H1 (cell line): ENCODE measurements at regions of chr4 and their contacts with region 1.

Region 1: GRCh38 chr4:24794916-24795665 is at the start of gene SOD3:
- DNase-seq: peak; percentile 53 to 74
- H3K4me3 ChIP-seq: peak within 1 kb of the TSS; percentile 0 to 57 (median 34); a peak in 5 of 8 replicates
- H3K27ac ChIP-seq: no peak within 1 kb of the TSS
- H3K4me1 ChIP-seq: peaks cover 1 to 18% (median 8%) of the 10 kb centered on the region in 4 experiments; a peak in 6 of 7 replicates
- H3K27me3 ChIP-seq: peaks cover 12 to 29% (median 25%) of the 10 kb centered on the region in 4 experiments
- CTCF ChIP-seq: no peak
- EP300 ChIP-seq: no peak
- POLR2A ChIP-seq: no peak
- RAD21 ChIP-seq: no peak; a peak in 1 of 4 replicates
- total RNA-seq, gene SOD3: 4.9 and 5.5 TPM in 2 replicates

Region 2: DNA sequence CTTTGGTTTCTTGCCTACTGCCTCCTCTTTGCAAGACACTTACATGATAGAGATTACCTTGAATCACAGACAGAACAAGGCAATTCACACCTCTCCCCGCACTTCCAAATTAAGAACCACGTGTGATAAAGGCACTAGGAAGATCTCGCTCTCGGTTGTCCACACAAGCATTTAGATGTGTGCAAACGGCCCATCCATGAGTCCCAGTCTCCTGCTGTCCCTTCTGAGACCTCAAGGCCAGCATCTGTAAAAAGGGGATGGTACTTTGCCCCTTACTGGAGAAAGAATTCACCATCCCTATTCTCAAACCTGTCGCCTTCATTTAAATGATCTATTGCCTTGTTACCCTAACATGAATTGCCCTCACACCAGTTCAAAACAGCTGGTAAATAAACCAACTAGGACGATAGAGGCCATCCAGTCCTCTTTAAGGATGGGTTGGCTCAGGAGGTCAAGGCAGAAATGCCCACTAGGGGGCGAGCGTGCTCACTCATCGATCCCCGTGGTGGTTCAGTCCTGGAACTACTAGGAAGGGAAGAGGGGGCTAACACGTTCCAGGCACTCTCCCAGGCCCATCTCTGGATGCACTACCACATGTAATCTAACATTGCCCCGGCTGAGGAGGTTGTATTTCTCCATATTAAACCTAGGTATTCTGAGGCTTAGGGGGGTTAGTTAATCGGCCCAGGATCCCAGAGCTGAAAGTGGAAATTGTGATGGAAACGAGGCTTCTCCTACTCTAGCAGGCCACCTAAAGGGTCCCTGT is 306.5 kb before region 1 on chr4:
- CTCF ChIA-PET with region 1: interaction called, 16 read pairs
- POLR2A ChIA-PET with region 1: no interaction called
- DNase-seq: peak in 1 of 2 experiments; percentile 98
- H3K4me3 ChIP-seq: no peak overlapping the region
- H3K27ac ChIP-seq: no peak overlapping the region
- H3K4me1 ChIP-seq: peaks cover 0 to 3% (median 0%) of the 10 kb centered on the region in 4 experiments; a peak in 3 of 7 replicates
- H3K27me3 ChIP-seq: peaks cover 0 to 1% (median 0%) of the 10 kb centered on the region in 4 experiments; a peak in 1 of 7 replicates
- CTCF ChIP-seq: peak; percentile 86 to 97 (median 96)
- EP300 ChIP-seq: no peak
- POLR2A ChIP-seq: no peak
- RAD21 ChIP-seq: peak; percentile 89 to 91

Region 3: GRCh38 chr4:24675721-24676389 is 119.2 kb before region 1 on chr4:
- CTCF ChIA-PET with region 1: no interaction called
- POLR2A ChIA-PET with region 1: no interaction called
- DNase-seq: no peak
- H3K4me3 ChIP-seq: no peak overlapping the region
- H3K27ac ChIP-seq: no peak overlapping the region
- H3K4me1 ChIP-seq: peaks cover 0 to 9% (median 3%) of the 10 kb centered on the region in 4 experiments; a peak in 5 of 7 replicates
- H3K27me3 ChIP-seq: no peaks in the 10 kb centered on the region
- CTCF ChIP-seq: no peak
- EP300 ChIP-seq: no peak
- POLR2A ChIP-seq: no peak
- RAD21 ChIP-seq: no peak

Region 4: GRCh38 chr4:24736066-24736465 is 59.0 kb before region 1 on chr4:
- CTCF ChIA-PET with region 1: interaction called, 25 read pairs
- POLR2A ChIA-PET with region 1: no interaction called
- DNase-seq: peak in 1 of 2 experiments; percentile 54
- H3K4me3 ChIP-seq: no peak overlapping the region
- H3K27ac ChIP-seq: no peak overlapping the region
- H3K4me1 ChIP-seq: no peaks in the 10 kb centered on the region
- H3K27me3 ChIP-seq: no peaks in the 10 kb centered on the region
- CTCF ChIP-seq: peak; percentile 65 to 81 (median 66)
- EP300 ChIP-seq: no peak
- POLR2A ChIP-seq: no peak
- RAD21 ChIP-seq: peak; percentile 72 to 83

Region 5: DNA sequence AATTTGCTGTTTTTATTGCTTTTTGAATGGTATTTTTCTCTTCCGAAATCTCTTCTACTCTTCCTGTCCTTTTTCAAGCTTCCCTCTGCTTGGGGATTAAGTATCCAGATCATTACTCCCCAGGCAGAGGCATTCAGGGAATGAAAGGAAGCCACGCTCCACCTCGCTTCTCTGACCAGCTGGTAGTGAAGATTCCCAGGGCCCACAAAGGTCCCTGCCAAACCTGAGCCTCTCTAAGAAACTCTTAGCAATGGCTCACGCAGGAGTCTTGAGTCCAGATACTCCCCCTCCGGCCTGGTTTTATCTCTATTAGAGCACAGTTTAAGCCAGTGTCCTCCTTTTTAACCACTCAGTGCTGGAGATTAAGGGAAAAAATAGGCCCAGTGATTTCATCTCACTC is 51.2 kb before region 1 on chr4:
- CTCF ChIA-PET with region 1: interaction called, 10 read pairs
- POLR2A ChIA-PET with region 1: no interaction called
- DNase-seq: no peak
- H3K4me3 ChIP-seq: no peak overlapping the region
- H3K27ac ChIP-seq: no peak overlapping the region
- H3K4me1 ChIP-seq: peaks cover 0 to 4% (median 0%) of the 10 kb centered on the region in 4 experiments; a peak in 2 of 7 replicates
- H3K27me3 ChIP-seq: no peaks in the 10 kb centered on the region
- CTCF ChIP-seq: no peak
- EP300 ChIP-seq: no peak
- POLR2A ChIP-seq: no peak
- RAD21 ChIP-seq: no peak

Region 6: DNA sequence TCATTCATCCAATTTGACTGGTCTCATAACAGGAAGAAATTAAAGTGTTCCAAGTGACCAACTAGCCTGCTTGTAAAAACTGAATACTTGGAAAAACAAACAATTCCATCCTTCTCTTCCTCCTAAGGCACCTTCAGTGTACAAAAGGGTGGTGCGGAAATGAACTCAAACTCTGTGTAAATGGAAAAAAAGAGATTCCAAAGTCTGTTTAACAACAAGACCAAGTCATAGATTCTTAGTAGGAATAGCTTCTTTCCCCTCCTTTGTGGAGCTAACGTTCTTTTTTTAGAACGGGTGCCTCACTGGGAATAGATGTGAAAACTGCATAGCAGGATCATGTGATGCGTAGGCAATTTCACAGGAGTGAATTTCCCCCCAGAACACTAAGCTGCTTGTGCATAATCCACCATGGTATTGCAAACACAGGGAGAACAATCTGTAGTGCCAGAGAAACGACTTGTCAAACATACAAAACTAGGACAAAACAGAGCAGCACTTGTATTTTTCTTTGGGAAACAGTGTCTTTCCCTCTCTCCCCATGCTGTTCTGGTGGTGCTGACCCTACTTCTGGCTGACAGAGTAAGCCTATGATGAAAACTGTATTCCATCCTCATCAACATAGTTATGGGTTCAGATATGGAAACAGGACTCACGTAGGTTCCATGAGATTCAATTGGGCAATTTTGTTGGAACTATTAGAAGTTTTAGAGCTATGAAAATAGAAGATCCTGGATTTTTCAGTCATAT is 12.9 kb before region 1 on chr4:
- CTCF ChIA-PET with region 1: interaction called, 15 read pairs
- POLR2A ChIA-PET with region 1: no interaction called
- DNase-seq: no peak
- H3K4me3 ChIP-seq: no peak overlapping the region
- H3K27ac ChIP-seq: no peak overlapping the region
- H3K4me1 ChIP-seq: peaks cover 0 to 3% (median 0%) of the 10 kb centered on the region in 4 experiments; a peak in 1 of 7 replicates
- H3K27me3 ChIP-seq: peaks cover 0 to 2% (median 0%) of the 10 kb centered on the region in 4 experiments; a peak in 1 of 7 replicates
- CTCF ChIP-seq: no peak
- EP300 ChIP-seq: no peak
- POLR2A ChIP-seq: no peak
- RAD21 ChIP-seq: no peak

Region 7: GRCh38 chr4:24809376-24809775 is 14.3 kb after region 1 on chr4:
- CTCF ChIA-PET with region 1: interaction called, 29 read pairs
- POLR2A ChIA-PET with region 1: interaction called, 3 read pairs
- DNase-seq: peak in 1 of 2 experiments; percentile 53
- H3K4me3 ChIP-seq: no peak overlapping the region
- H3K27ac ChIP-seq: no peak overlapping the region
- H3K4me1 ChIP-seq: peaks cover 2 to 12% (median 6%) of the 10 kb centered on the region in 4 experiments; a peak in 4 of 7 replicates
- H3K27me3 ChIP-seq: no peaks in the 10 kb centered on the region
- CTCF ChIP-seq: peak; percentile 58 to 75 (median 60)
- EP300 ChIP-seq: no peak
- POLR2A ChIP-seq: no peak
- RAD21 ChIP-seq: peak; percentile 55 to 63

Region 8: DNA sequence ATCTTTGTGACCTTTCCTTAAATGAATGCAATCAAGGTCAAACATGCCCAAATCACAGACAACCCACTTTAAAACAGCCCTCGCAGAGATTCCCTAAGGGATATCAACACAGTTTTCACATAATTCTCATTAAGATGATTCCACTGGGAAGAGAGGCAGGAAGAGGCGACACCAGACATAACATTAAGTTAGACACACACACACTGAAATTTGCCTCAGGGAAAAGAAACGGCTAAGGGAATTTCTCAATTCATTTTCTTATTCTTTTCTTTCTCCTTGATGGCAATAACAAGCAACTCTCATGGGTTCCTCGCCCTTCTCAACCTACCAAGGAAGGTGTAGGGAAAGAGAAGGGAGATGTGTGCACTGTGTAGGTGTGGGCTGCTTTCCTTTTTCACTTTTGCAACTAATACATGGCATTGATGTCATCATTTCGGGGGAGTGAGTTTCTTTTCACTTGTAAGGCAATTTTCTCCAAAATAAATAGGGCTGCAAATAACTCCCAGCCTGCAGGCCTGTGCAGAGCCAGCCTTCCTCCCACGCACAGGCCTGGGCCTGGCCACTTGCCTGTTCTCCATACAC is 41.7 kb after region 1 on chr4:
- CTCF ChIA-PET with region 1: no interaction called
- POLR2A ChIA-PET with region 1: no interaction called
- DNase-seq: no peak
- H3K4me3 ChIP-seq: no peak overlapping the region
- H3K27ac ChIP-seq: no peak overlapping the region
- H3K4me1 ChIP-seq: no peaks in the 10 kb centered on the region
- H3K27me3 ChIP-seq: no peaks in the 10 kb centered on the region
- CTCF ChIP-seq: no peak
- EP300 ChIP-seq: no peak
- POLR2A ChIP-seq: no peak
- RAD21 ChIP-seq: no peak

Region 9: GRCh38 chr4:24885342-24885741 is 90.3 kb after region 1 on chr4:
- CTCF ChIA-PET with region 1: interaction called, 12 read pairs
- POLR2A ChIA-PET with region 1: no interaction called
- DNase-seq: no peak
- H3K4me3 ChIP-seq: no peak overlapping the region
- H3K27ac ChIP-seq: no peak overlapping the region
- H3K4me1 ChIP-seq: peaks cover 0 to 4% (median 0%) of the 10 kb centered on the region in 4 experiments; a peak in 2 of 7 replicates
- H3K27me3 ChIP-seq: no peaks in the 10 kb centered on the region
- CTCF ChIP-seq: peak in 1 of 3 experiments; percentile 15; a peak in 2 of 4 replicates
- EP300 ChIP-seq: no peak
- POLR2A ChIP-seq: no peak
- RAD21 ChIP-seq: peak in 1 of 2 experiments; percentile 37; a peak in 2 of 4 replicates

Region 10: DNA sequence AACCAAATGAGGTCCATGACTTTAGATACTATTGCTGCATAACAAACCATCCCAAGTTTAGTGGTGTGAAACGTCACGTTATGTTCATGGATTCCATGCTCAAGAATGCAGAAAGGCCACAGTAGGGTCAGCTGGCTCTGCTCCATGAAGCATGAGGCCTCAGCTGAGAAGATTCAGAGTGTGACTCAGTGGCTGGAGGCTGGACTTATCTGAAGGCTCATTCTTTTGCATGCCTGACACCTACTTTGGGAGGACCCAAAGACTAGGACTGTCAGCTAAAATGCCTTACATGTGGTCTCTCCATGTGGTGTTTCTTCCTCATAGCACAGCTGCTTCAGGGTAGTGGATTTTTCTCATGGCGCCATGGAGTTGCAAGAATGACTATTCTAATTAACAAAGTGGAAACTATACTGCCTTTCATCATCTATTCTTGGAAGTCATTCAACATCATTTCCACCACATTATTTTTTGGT is 129.3 kb after region 1 on chr4:
- CTCF ChIA-PET with region 1: no interaction called
- POLR2A ChIA-PET with region 1: no interaction called
- DNase-seq: no peak
- H3K4me3 ChIP-seq: no peak overlapping the region
- H3K27ac ChIP-seq: no peak overlapping the region
- H3K4me1 ChIP-seq: peaks cover 0 to 5% (median 0%) of the 10 kb centered on the region in 4 experiments; a peak in 2 of 7 replicates
- H3K27me3 ChIP-seq: no peaks in the 10 kb centered on the region
- CTCF ChIP-seq: no peak
- EP300 ChIP-seq: no peak
- POLR2A ChIP-seq: no peak
- RAD21 ChIP-seq: no peak

Region 11: DNA sequence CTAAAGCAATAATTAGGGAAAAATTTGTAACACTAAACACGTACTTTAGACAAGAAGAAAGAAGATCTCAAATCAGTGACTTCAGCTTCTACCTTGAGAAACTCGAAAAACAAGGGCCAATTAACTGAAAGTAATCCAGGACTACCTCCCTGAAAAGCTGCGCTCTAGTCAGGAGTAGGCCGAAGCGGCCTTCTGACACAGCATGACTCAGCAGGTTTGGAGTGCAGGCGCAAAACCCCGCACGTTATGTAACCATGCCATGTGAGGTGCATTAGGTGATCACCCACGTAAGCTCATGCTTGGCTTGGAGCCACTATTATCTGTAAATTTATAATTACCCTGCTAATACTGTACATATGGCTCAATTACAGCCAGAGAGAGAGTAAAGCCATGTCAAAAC is 170.5 kb after region 1 on chr4:
- CTCF ChIA-PET with region 1: no interaction called
- POLR2A ChIA-PET with region 1: no interaction called
- DNase-seq: peak in 1 of 2 experiments; percentile 57
- H3K4me3 ChIP-seq: no peak overlapping the region
- H3K27ac ChIP-seq: no peak overlapping the region
- H3K4me1 ChIP-seq: peaks cover 0 to 2% (median 0%) of the 10 kb centered on the region in 4 experiments; a peak in 1 of 7 replicates
- H3K27me3 ChIP-seq: no peaks in the 10 kb centered on the region
- CTCF ChIP-seq: no peak
- EP300 ChIP-seq: no peak
- POLR2A ChIP-seq: no peak
- RAD21 ChIP-seq: no peak